IMR-90 (cell line): ENCODE measurements at regions of chrX and their contacts with region 1.

Region 1: DNA sequence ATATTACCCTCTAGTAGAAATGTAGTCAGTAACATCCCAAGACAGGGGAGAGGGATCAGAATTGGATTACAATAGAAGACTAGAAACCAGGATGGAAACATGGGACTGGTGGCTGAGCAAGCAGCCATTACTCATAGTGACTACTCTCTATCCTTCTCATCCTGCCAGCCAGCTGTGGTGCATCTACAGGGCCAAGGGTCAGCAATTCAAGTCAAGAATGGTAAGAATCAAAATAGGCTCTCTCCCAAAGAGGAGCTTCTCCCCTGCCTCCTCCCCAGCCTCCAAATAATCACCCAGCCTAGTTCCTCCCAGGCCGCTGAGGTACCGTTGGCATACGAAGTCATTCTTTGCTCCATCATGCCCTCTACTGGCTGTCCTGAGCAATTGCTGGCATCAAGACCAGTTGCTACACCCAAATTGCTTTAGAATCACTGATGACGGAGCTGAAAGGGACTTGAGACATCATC is 19.4 kb downstream of the AWAT2 start:
- DNase-seq: peak; percentile 49
- ATAC-seq: peak; percentile 78
- H3K4me3 ChIP-seq: no peak overlapping the region
- H3K27ac ChIP-seq: no peak overlapping the region
- H3K4me1 ChIP-seq: no peaks in the 10 kb centered on the region
- H3K27me3 ChIP-seq: peaks cover 15% of the 10 kb centered on the region
- CTCF ChIP-seq: peak; percentile 59
- POLR2A ChIP-seq: no peak
- RAD21 ChIP-seq: peak; percentile 53

Region 2: GRCh38 chrX:69429339-69430015 is 600.9 kb before region 1 on chrX:
- CTCF ChIA-PET with region 1: no interaction called
- POLR2A ChIA-PET with region 1: no interaction called
- dilution Hi-C with region 1: no loop called
- in situ Hi-C with region 1: no loop called
- intact Hi-C with region 1: loop called (anchors 5 kb)
- DNase-seq: no peak
- ATAC-seq: no peak
- H3K4me3 ChIP-seq: no peak overlapping the region
- H3K27ac ChIP-seq: no peak overlapping the region
- H3K4me1 ChIP-seq: no peaks in the 10 kb centered on the region
- H3K27me3 ChIP-seq: peaks cover 17% of the 10 kb centered on the region
- CTCF ChIP-seq: no peak
- POLR2A ChIP-seq: no peak
- RAD21 ChIP-seq: no peak